Activated T-helper 1 cell treated with anti-CD3 and anti-CD28 coated beads, Interleukin-12 subunit alpha, Interleukin-12 subunit beta, Interleukin-2, Interleukin-4 antibody, amounts not matched to agents 30 ng/mL and 10 ng/mL and 1 ng/mL, durations not matched to agents 14 hours and 24 hours and 36 hours (primary cell): ENCODE measurements at regions of chr3 and their contacts with region 1.

Region 1: DNA sequence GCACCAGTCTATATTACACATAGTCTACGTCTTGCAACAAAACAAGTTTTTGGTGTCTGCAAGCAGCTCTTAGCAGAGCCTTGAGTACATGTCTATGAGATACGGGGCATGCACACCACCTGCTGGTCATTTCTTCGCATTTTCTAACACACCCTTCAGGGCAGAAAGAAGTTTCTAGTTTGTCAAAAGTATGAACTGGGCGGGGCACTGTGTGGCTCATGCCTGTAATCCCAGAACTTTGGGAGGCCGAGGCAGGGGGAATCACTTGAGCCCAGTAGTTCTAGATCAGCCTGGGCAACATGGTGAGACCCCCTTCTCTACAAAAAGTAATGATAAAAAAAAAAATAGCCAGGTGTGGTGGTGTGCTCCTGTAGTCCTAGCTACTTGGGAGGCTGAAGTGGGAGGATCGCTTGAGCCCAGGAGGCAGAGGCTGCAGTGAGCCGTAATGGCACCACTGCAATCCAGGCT is 64.2 kb upstream of the ARL8B start:
- DNase-seq: peak; percentile 69
- H3K4me3 Mint-ChIP-seq: peak overlapping the region; percentile 23
- H3K27ac Mint-ChIP-seq: peak overlapping the region; percentile 53
- H3K4me1 Mint-ChIP-seq: peaks cover 52% of the 10 kb centered on the region
- H3K27me3 Mint-ChIP-seq: no peaks in the 10 kb centered on the region

Region 2: GRCh38 chr3:4712143-4712542 is 345.7 kb before region 1 on chr3:
- intact Hi-C with region 1: loop called (anchors 1 kb)
- DNase-seq: no peak
- H3K4me3 Mint-ChIP-seq: no peak overlapping the region
- H3K27ac Mint-ChIP-seq: peak overlapping the region; percentile 32
- H3K4me1 Mint-ChIP-seq: peaks cover 61% of the 10 kb centered on the region
- H3K27me3 Mint-ChIP-seq: no peaks in the 10 kb centered on the region

Region 3: GRCh38 chr3:4986782-4987537 is 70.9 kb before region 1 on chr3:
- intact Hi-C with region 1: loop called (anchors 1 kb)
- DNase-seq: peak; percentile 78
- H3K4me3 Mint-ChIP-seq: peak overlapping the region; percentile 90
- H3K27ac Mint-ChIP-seq: peak overlapping the region; percentile 84
- H3K4me1 Mint-ChIP-seq: peaks cover 64% of the 10 kb centered on the region
- H3K27me3 Mint-ChIP-seq: no peaks in the 10 kb centered on the region

Region 4: GRCh38 chr3:5026331-5027218 is 31.3 kb before region 1 on chr3:
- intact Hi-C with region 1: loop called (anchors 2 kb)
- DNase-seq: peak; percentile 59
- H3K4me3 Mint-ChIP-seq: peak overlapping the region; percentile 81
- H3K27ac Mint-ChIP-seq: peak overlapping the region; percentile 95
- H3K4me1 Mint-ChIP-seq: peaks cover 70% of the 10 kb centered on the region
- H3K27me3 Mint-ChIP-seq: no peaks in the 10 kb centered on the region

Region 5: GRCh38 chr3:5376761-5377160 is 318.9 kb after region 1 on chr3:
- intact Hi-C with region 1: no loop called
- DNase-seq: no peak
- H3K4me3 Mint-ChIP-seq: no peak overlapping the region
- H3K27ac Mint-ChIP-seq: no peak overlapping the region
- H3K4me1 Mint-ChIP-seq: no peaks in the 10 kb centered on the region
- H3K27me3 Mint-ChIP-seq: no peaks in the 10 kb centered on the region